Esophagus squamous epithelium (tissue), 5 donors: ENCODE measurements at regions of chr3 and their contacts with region 1.

Region 1: GRCh38 chr3:98329392-98330124 is 24.1 kb upstream of the OR5K4 start:
- DNase-seq: no peak
- H3K4me3 ChIP-seq: no peak overlapping the region
- H3K27ac ChIP-seq: no peak overlapping the region
- H3K4me1 ChIP-seq: no peaks in the 10 kb centered on the region
- H3K27me3 ChIP-seq: peaks cover 0 to 10% (median 0%) of the 10 kb centered on the region in 4 donors
- CTCF ChIP-seq: peak; percentile 16 to 79 (median 52)
- POLR2A ChIP-seq: no peak

Region 2: GRCh38 chr3:98039322-98040024 is 290.1 kb before region 1 on chr3:
- intact Hi-C with region 1: loop called (anchors 5 kb)
- DNase-seq: no peak
- H3K4me3 ChIP-seq: peak overlapping the region in 3 of 4 donors; percentile 26 to 63 (median 28)
- H3K27ac ChIP-seq: peak overlapping the region in 1 of 4 donors; percentile 54
- H3K4me1 ChIP-seq: peaks cover 0 to 6% (median 3%) of the 10 kb centered on the region in 3 donors
- H3K27me3 ChIP-seq: peaks cover 0 to 24% (median 2%) of the 10 kb centered on the region in 4 donors
- CTCF ChIP-seq: peak; percentile 79 to 90 (median 88)
- POLR2A ChIP-seq: no peak

Region 3: GRCh38 chr3:98692787-98693473 is 363.4 kb after region 1 on chr3:
- intact Hi-C with region 1: no loop called
- DNase-seq: no peak
- H3K4me3 ChIP-seq: no peak overlapping the region
- H3K27ac ChIP-seq: peak overlapping the region in 2 of 4 donors; percentile 27 to 29
- H3K4me1 ChIP-seq: no peaks in the 10 kb centered on the region
- H3K27me3 ChIP-seq: no peaks in the 10 kb centered on the region
- CTCF ChIP-seq: no peak
- POLR2A ChIP-seq: no peak